Right ventricle myocardium inferior (tissue), 1 donor: ENCODE measurements at regions of chr7 and their contacts with region 1.

Region 1: DNA sequence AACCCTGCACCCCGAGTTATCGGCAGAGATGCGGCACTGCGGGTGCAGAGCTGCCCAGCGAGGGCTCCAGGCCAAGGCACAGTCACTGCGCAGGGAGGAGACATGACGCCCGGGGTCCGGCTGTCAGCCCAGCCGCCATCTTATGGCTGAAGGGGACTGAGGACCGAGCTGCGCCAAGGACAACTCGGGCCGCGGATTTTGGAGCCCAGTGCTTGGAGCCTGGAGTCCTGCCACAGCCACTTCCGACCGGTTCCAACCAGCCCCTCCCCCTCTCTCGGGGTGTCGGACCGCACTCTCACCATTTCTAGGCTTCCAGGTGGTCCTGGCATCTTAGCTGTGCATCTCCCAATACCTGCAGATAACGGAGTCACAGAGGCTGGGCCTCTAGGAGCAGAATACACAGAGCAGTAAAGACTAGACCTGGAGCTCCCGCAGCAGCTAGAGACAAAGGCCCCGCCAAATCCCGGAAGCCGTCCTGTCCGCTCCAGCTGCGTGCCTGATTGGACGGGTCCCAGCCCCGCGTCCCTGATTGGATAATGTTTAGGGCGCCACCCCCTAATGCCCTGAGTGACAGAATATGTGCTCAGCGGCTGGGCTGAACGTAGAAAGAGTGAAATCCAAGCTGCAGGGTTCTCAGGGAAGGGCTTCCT is at the start of gene ZNF680:
- DNase-seq: peak; percentile 96
- ATAC-seq: peak; percentile 97
- total RNA-seq, gene ZNF680: 20.9 TPM

Region 2: GRCh38 chr7:64307254-64308015 is 255.3 kb before region 1 on chr7:
- intact Hi-C with region 1: loop called (anchors 5 kb)
- DNase-seq: peak; percentile 97
- ATAC-seq: peak; percentile 99

Region 3: GRCh38 chr7:64463636-64464378 is 98.9 kb before region 1 on chr7:
- intact Hi-C with region 1: loop called (anchors 10 kb)
- DNase-seq: peak; percentile 86
- ATAC-seq: peak; percentile 100

Region 4: GRCh38 chr7:64504581-64505120 is 58.1 kb before region 1 on chr7:
- intact Hi-C with region 1: loop called (anchors 5 kb)
- DNase-seq: no peak
- ATAC-seq: no peak

Region 5: DNA sequence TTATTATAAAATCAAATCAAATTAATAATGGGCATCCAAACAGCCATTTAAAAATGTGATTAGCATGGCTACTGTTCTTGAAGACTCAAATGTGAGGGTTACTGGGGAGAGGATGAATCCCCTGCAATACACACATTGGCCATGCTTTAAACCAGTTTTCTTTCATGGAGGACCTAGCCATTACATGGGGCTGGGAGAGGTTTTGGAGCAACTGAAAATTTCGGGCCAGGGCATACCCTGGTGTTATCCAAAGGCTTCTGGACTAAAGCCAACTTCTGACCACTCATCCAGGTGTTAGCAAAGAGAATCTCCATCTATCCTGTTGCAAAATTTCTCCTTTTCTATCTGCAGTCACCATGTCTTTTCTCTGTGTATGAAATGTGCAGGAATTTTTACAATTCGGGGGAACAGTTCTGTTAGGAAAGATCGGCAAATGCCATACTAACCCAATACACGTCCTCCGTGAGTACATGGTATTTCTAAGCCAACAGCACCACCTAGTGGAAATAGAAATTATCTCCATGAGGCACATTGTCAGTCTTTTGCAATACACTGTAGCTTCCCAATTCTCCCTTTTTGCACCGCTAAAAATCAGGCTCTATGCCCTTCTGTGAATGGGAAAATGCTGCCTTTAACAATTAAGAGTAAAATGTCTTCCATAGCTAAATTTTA is 56.2 kb after region 1 on chr7:
- intact Hi-C with region 1: loop called (anchors 5 kb)
- DNase-seq: no peak
- ATAC-seq: peak; percentile 72